WTC11 (cell line): ENCODE measurements at regions of chr5 and their contacts with region 1.

Region 1: GRCh38 chr5:144487207-144487606 is 316.5 kb downstream of the KCTD16 start:
- DNase-seq: peak; percentile 46
- ATAC-seq: peak; percentile 91
- H3K4me3 Mint-ChIP-seq: peak overlapping the region; percentile 41
- H3K27ac Mint-ChIP-seq: no peak overlapping the region
- H3K4me1 Mint-ChIP-seq: peaks cover 38% of the 10 kb centered on the region
- H3K27me3 Mint-ChIP-seq: peaks cover 42% of the 10 kb centered on the region
- CTCF ChIP-seq: no peak

Region 2: DNA sequence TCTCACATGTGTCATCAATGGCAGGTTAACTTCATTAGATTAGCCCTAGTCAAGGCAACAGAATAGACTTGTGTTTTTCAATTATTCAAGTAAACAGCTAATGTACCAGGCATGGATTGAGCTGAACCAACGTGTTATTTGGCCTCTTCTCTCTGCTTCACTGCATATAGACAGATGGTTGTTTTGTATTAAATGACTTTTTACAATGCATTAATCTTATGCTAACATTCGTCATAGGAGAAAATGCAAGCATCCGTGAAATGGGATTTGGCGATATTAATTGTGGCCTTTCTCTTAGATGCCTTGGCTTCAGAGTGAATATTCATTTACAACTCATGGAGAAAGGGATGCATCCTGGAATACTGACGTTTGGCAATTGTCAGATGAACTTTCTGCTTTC is 108.5 kb before region 1 on chr5:
- CTCF ChIA-PET with region 1: no interaction called
- POLR2A ChIA-PET with region 1: no interaction called
- DNase-seq: no peak
- ATAC-seq: no peak
- H3K4me3 Mint-ChIP-seq: no peak overlapping the region
- H3K27ac Mint-ChIP-seq: no peak overlapping the region
- H3K4me1 Mint-ChIP-seq: peaks cover 7% of the 10 kb centered on the region
- H3K27me3 Mint-ChIP-seq: peaks cover 68% of the 10 kb centered on the region
- CTCF ChIP-seq: no peak

Region 3: GRCh38 chr5:144467792-144468191 is 19.4 kb before region 1 on chr5:
- CTCF ChIA-PET with region 1: interaction called, 21 read pairs
- POLR2A ChIA-PET with region 1: no interaction called
- DNase-seq: peak; percentile 52
- ATAC-seq: peak; percentile 98
- H3K4me3 Mint-ChIP-seq: no peak overlapping the region
- H3K27ac Mint-ChIP-seq: peak overlapping the region; percentile 47
- H3K4me1 Mint-ChIP-seq: peaks cover 10% of the 10 kb centered on the region
- H3K27me3 Mint-ChIP-seq: no peaks in the 10 kb centered on the region
- CTCF ChIP-seq: 0 out of 2 replicates have a peak, but pooled peaks have one; percentile 7

Region 4: DNA sequence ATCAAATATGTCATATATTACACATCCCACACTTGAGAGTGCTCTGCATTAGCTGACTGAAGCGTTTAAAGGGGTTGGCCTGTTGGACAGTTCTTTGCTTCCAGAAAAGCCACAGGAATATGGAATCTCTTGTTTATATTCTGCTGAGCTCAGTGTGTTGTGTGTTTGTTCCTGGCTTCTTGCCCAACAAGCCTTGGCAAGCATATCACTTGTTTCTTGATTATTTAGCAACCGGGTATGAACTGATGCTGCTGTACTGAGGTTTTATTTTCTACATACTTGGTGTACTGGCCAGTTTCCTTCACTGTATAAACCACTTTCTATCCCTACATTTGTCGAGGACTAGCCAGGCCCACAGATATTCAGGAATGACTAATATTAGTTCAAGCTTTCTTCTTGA is 62.4 kb after region 1 on chr5:
- CTCF ChIA-PET with region 1: no interaction called
- POLR2A ChIA-PET with region 1: no interaction called
- DNase-seq: no peak
- ATAC-seq: no peak
- H3K4me3 Mint-ChIP-seq: no peak overlapping the region
- H3K27ac Mint-ChIP-seq: no peak overlapping the region
- H3K4me1 Mint-ChIP-seq: no peaks in the 10 kb centered on the region
- H3K27me3 Mint-ChIP-seq: no peaks in the 10 kb centered on the region; the same call in 1 of the 2 replicates
- CTCF ChIP-seq: no peak

Region 5: DNA sequence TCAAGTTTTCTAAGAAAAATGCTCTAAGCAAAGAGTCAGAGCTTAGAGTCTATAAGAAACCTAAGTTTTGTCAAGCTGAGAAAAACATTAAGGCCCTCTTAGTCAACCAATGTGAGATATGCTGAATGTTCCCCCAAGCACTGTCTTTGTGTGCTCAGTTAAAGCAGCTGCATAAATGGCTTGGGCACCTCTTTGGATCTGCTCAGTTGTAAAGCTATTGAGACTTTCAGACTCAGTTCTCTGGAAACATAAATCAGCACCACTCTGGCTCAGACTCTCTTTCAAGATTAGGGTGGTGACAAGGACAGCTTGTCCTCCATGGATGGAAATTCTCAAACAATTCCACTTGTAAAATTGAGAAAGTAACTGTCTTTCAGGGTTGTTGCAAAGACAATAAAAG is 540.1 kb after region 1 on chr5:
- CTCF ChIA-PET with region 1: no interaction called
- POLR2A ChIA-PET with region 1: no interaction called
- DNase-seq: no peak
- ATAC-seq: peak; percentile 64
- H3K4me3 Mint-ChIP-seq: no peak overlapping the region
- H3K27ac Mint-ChIP-seq: no peak overlapping the region
- H3K4me1 Mint-ChIP-seq: peaks cover 15% of the 10 kb centered on the region
- H3K27me3 Mint-ChIP-seq: peaks cover 19% of the 10 kb centered on the region
- CTCF ChIP-seq: no peak

Region 6: GRCh38 chr5:145237843-145238242 is 750.6 kb after region 1 on chr5:
- CTCF ChIA-PET with region 1: interaction called, 15 read pairs
- POLR2A ChIA-PET with region 1: no interaction called
- DNase-seq: peak; percentile 73
- ATAC-seq: peak; percentile 97
- H3K4me3 Mint-ChIP-seq: no peak overlapping the region
- H3K27ac Mint-ChIP-seq: no peak overlapping the region
- H3K4me1 Mint-ChIP-seq: peaks cover 37% of the 10 kb centered on the region
- H3K27me3 Mint-ChIP-seq: no peaks in the 10 kb centered on the region
- CTCF ChIP-seq: peak; percentile 73